Calu3 (cell line): ENCODE measurements at regions of chr2 and their contacts with region 1.

Region 1: GRCh38 chr2:193584522-193584938 is 1389.8 kb upstream of the TMEFF2 start:
- DNase-seq: peak; percentile 15
- H3K4me3 Mint-ChIP-seq: no peak overlapping the region
- H3K27ac Mint-ChIP-seq: no peak overlapping the region
- H3K4me1 Mint-ChIP-seq: peaks cover 37% of the 10 kb centered on the region
- H3K27me3 Mint-ChIP-seq: no peaks in the 10 kb centered on the region
- CTCF ChIP-seq: peak; percentile 52

Region 2: GRCh38 chr2:192194866-192195547 is 1389.5 kb before region 1 on chr2 and contains the start of gene TMEFF2:
- CTCF ChIA-PET with region 1: no interaction called
- intact Hi-C with region 1: loop called (anchors 5 kb)
- DNase-seq: peak; percentile 80
- H3K4me3 Mint-ChIP-seq: peak within 1 kb of the TSS; percentile 91
- H3K27ac Mint-ChIP-seq: peak within 1 kb of the TSS; percentile 34
- H3K4me1 Mint-ChIP-seq: peaks cover 27% of the 10 kb centered on the region
- H3K27me3 Mint-ChIP-seq: peaks cover 58% of the 10 kb centered on the region
- CTCF ChIP-seq: no peak
- total RNA-seq, gene TMEFF2: 0.64 TPM in 1 of 2 replicates, not detected in the other

Region 3: DNA sequence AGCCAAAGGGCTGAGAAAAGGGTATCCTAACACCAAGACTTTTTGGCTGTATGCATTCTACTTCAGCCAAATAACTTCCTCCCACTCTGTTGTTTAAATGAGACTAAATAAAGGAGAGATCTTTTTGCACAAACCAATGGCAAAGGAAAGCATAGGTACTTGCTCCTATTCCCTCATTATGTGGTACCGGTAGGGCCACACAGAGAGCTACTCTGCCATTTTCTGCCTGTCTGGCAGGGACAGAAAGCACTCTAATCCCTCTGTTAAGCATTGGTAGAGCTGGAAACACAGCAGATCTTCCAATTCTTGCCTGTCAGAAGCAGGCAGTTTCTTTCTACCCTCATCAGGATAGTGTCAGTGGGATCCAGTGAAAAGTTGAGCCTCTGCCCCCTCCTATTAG is 471.5 kb before region 1 on chr2:
- CTCF ChIA-PET with region 1: no interaction called
- intact Hi-C with region 1: loop called (anchors 2 kb)
- DNase-seq: no peak
- H3K4me3 Mint-ChIP-seq: no peak overlapping the region
- H3K27ac Mint-ChIP-seq: peak overlapping the region; percentile 21
- H3K4me1 Mint-ChIP-seq: no peaks in the 10 kb centered on the region
- H3K27me3 Mint-ChIP-seq: no peaks in the 10 kb centered on the region
- CTCF ChIP-seq: no peak

Region 4: DNA sequence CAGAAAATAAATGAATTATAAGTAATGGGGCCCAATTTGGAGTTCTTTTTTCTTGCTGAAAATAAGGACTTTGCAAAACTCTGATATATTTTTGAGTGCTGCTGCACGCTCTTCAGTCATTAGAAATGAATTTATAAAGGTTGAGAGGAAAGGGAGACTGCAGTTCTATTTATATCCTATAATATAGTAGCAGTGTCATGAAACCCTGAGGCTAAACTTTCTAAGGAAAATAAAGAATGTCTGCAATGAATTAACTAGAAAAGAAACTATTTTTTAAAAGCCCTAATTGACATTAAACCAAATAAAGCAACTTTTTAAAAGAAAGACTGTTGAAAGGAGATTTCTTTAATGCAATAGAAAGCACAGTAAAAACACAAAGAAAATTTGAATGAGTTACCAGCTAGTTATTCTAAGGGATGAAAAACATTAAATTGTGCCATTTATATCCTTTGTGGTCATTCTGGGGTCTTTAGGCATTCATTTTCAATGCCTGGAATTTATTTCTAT is 317.0 kb before region 1 on chr2:
- CTCF ChIA-PET with region 1: no interaction called
- intact Hi-C with region 1: loop called (anchors 10 kb)
- DNase-seq: no peak
- H3K4me3 Mint-ChIP-seq: no peak overlapping the region
- H3K27ac Mint-ChIP-seq: no peak overlapping the region
- H3K4me1 Mint-ChIP-seq: no peaks in the 10 kb centered on the region
- H3K27me3 Mint-ChIP-seq: no peaks in the 10 kb centered on the region
- CTCF ChIP-seq: no peak

Region 5: DNA sequence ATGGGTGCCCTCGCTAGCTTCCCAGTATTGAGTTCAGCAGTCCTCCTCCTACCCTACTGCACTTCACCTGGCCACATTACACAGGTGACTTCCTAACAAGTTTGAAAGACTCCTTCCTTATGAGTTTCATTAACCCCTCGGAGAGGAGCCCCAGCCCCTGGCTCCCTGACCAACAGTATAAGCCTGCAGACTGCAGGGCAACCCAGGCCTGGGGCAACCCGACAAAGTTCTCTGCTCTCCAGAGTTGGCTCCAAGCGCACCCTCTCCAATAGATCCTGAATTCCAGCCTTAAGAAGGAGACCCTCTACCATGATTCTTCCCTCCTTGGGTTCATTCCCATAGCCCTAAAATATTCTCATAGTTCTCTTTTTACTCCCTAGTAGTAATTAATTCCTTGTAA is 227.0 kb before region 1 on chr2:
- CTCF ChIA-PET with region 1: no interaction called
- intact Hi-C with region 1: no loop called
- DNase-seq: no peak
- H3K4me3 Mint-ChIP-seq: no peak overlapping the region
- H3K27ac Mint-ChIP-seq: no peak overlapping the region
- H3K4me1 Mint-ChIP-seq: no peaks in the 10 kb centered on the region
- H3K27me3 Mint-ChIP-seq: no peaks in the 10 kb centered on the region
- CTCF ChIP-seq: no peak

Region 6: DNA sequence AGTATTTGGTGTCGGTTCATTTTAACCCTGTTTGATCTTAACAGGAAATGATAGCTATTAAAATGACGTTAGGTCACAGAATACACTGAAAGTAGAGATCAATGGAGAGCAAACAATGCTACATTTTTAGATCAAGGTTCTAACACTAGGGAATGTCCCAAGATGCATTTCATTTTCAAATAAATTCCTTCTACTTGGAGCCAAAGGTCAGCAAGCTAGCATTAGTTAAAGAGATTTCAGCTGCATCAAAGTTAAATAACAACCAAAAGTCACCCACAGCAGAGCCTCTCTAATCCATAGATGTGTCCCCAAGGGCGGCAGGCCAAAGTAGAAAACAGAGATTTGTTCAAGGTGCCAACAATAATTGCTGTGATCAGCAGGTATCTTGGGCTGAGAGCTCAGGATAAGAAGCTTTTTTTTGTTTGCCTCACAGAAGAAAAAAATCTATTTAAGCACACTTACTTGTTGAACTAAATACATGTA is 156.2 kb before region 1 on chr2:
- CTCF ChIA-PET with region 1: no interaction called
- intact Hi-C with region 1: loop called (anchors 5 kb)
- DNase-seq: peak; percentile 36
- H3K4me3 Mint-ChIP-seq: no peak overlapping the region
- H3K27ac Mint-ChIP-seq: no peak overlapping the region
- H3K4me1 Mint-ChIP-seq: peaks cover 9% of the 10 kb centered on the region
- H3K27me3 Mint-ChIP-seq: no peaks in the 10 kb centered on the region
- CTCF ChIP-seq: no peak

Region 7: GRCh38 chr2:193627187-193627926 is 42.8 kb after region 1 on chr2:
- CTCF ChIA-PET with region 1: no interaction called
- intact Hi-C with region 1: no loop called
- DNase-seq: peak; percentile 2
- H3K4me3 Mint-ChIP-seq: no peak overlapping the region
- H3K27ac Mint-ChIP-seq: peak overlapping the region; percentile 44
- H3K4me1 Mint-ChIP-seq: peaks cover 12% of the 10 kb centered on the region
- H3K27me3 Mint-ChIP-seq: no peaks in the 10 kb centered on the region
- CTCF ChIP-seq: no peak